Right ventricle myocardium inferior (tissue), 1 donor: ENCODE measurements at regions of chr6 and their contacts with region 1.

Region 1: GRCh38 chr6:71420693-71421328 is 132.2 kb downstream of the OGFRL1 start:
- DNase-seq: peak; percentile 96
- ATAC-seq: peak; percentile 99

Region 2: DNA sequence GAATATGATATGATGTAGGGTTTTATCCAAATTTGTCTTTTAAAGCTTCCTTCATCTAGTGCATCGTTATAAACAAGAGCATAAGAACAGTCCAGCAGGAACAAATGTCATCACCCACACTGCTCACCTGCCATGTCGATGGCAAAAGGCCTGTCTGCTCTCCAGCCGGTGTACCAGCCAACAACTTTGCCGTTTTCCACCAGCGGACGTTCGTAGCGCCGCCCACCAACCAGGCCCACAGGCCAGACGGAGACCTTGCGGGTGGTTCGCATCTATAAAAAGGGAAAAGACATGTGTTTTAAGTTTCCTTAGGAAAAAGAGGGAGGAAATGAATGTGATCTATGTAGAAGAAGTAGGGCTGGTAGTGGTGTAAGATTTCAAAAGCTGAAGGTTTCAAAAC is 526.8 kb before region 1 on chr6:
- intact Hi-C with region 1: no loop called
- DNase-seq: no peak
- ATAC-seq: no peak

Region 3: DNA sequence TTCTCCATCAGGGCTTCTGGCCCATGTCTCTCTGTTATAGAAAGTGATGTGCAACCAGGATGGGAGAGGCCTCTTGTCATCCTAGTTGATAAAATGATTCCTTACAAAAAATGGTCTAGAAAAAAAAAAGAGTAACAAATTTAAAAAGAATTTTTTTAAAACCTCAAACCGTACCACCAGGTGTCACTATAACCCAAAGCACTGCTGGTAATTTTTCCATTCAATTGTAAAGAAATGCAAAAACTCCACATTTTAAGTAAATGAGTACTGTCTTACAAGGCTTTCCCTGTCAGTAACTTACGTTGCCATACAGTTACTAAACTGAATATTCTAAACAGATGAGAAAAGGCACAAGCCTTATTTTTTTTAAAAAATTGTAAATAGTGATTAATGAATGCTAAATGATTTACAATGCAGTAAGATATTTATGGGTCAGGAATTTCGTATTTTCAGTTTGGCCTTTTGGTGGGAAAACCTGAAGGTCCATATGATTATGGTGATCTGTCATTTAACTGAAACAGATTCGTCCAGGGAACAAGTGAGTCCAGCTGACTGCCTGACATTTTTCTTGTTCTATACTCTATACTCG is 36.8 kb before region 1 on chr6:
- intact Hi-C with region 1: loop called (anchors 2 kb)
- DNase-seq: no peak
- ATAC-seq: no peak

Region 4: DNA sequence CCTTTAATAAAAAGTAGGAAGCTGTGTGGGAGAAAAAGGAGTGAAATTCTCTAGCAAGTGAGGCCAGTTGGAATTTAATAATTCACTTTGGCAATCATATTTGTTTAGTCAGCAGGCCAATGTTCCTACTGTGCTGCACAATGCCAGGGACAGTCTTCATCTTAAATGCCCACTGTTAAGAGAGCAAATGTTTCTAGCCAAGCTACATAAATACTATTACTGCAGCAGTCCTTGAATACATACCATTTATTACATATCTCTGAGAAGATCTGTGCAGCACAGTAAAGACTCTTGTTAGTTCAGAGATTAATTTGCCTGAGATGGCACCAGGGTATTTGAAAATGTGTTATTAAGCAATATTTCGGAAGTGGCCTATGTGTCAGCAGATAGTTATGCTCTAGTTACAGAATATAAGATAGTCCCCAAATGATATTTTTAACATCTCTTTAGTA is 26.8 kb before region 1 on chr6:
- intact Hi-C with region 1: loop called (anchors 2 kb)
- DNase-seq: no peak
- ATAC-seq: peak; percentile 69

Region 5: DNA sequence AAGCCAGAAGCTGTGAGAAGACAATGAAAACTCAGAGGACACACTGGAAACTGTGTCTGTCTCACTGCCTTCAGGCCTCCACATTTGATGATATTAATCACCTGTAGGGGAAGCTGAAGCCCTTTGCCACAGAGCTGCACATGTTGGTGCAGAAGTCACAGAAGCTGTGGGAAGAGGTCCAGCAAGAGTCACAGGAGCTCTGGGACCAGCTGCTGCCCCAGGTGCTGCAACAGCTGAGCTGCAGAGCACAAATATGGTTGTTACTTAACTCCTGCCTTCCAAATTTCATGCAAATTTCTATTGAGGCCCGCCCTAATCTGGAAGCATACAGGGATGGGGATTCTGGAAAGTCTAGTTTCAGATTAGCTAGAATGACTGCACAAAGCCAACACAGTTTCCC is 37.1 kb after region 1 on chr6:
- intact Hi-C with region 1: no loop called
- DNase-seq: no peak
- ATAC-seq: no peak

Region 6: GRCh38 chr6:71482742-71483141 is 61.9 kb after region 1 on chr6:
- intact Hi-C with region 1: loop called (anchors 2 kb)
- DNase-seq: no peak
- ATAC-seq: no peak

Region 7: GRCh38 chr6:71496018-71496721 is 75.4 kb after region 1 on chr6:
- intact Hi-C with region 1: loop called (anchors 5 kb)
- DNase-seq: peak; percentile 41
- ATAC-seq: peak; percentile 44

Region 8: GRCh38 chr6:71602385-71603007 is 181.7 kb after region 1 on chr6:
- intact Hi-C with region 1: no loop called
- DNase-seq: no peak
- ATAC-seq: no peak

Region 9: GRCh38 chr6:71675386-71675785 is 254.6 kb after region 1 on chr6:
- intact Hi-C with region 1: no loop called
- DNase-seq: no peak
- ATAC-seq: no peak